ENCODE measurements at regions of chr17 and their contacts with region 1.

Region 1: DNA sequence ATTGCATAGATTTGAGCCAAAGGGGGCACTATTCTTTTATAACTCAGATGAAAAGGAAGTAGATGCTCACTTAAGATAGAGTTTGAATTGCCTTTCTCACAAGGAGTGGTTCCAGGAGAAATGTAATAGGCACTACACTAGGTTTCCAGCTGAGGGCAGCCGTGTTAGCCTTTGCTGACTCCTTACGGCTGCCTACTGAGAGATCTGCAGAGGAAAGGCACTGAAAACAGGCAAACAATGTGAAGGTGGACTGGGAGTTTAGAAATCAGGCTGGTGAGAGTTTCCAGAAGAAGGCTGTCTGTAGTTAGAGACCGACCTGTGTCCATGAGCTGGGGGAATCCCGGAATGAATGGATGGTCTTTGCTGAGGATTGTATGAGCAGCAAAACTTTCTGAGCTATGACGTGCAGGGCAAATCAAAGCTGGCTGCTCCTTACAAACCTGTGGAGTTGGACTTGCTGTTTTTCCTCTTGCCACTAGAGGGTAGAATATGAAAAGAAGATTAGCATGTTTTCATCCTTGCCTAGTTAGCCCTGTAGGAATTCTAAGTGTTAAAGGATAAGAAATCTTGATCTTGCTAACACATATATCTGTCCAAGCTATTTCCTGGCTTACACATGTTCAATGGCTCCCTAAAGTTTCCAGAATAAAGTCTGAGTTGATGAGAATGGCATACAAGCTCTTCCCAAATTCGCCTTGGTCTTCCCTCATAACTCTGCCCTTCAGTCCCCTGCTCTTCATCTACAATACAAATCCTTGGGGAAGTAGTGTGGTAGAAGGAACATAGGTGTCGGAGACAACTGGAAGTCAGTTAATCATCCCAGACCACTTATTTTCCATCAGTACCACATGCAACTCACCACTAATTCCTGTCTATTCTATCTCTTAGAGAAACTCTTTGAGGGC is 20.1 kb upstream of the TAOK1 start:
- DNase-seq: peak; percentile 89 to 93
- ATAC-seq: peak; percentile 97 to 99
- H3K4me3 ChIP-seq: no peak overlapping the region; the same call in 2 of the 3 replicates
- H3K27ac ChIP-seq: peak overlapping the region; percentile 20 to 63; a peak in 4 of 6 replicates
- H3K4me1 ChIP-seq: peaks cover 14% of the 10 kb centered on the region
- CTCF ChIP-seq: peak; percentile 94
- EP300 ChIP-seq: no peak
- POLR2A ChIP-seq: no peak
- RAD21 ChIP-seq: peak; percentile 82 to 89

Region 2: GRCh38 chr17:29347831-29348629 is 22.1 kb before region 1 on chr17:
- CTCF ChIA-PET with region 1: interaction called, 158 read pairs
- POLR2A ChIA-PET with region 1: no interaction called
- DNase-seq: no peak
- ATAC-seq: no peak
- H3K4me3 ChIP-seq: no peak overlapping the region
- H3K27ac ChIP-seq: no peak overlapping the region
- H3K4me1 ChIP-seq: no peaks in the 10 kb centered on the region
- CTCF ChIP-seq: no peak
- EP300 ChIP-seq: no peak
- POLR2A ChIP-seq: no peak
- RAD21 ChIP-seq: no peak

Region 3: DNA sequence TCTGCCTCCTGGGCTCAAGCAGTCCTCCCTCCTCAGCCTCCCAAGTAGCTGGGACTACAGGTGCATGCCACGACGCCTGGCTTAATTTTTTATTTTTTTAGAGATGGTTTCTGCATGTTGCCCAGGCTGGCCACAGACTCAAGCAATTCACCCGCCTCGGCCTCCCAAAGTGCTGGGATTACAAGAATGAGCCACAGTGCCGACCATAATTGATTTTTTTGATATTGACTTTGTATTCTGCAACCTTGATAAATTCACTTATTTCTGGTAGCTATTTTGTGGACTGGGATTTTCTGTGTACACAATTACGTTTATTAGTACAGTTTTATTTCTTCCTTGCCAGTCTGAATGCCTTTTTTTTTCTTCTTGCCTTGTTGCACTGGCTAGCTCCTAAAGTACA is 50.0 kb after region 1 on chr17:
- CTCF ChIA-PET with region 1: interaction called, 14 read pairs
- POLR2A ChIA-PET with region 1: no interaction called
- DNase-seq: no peak
- ATAC-seq: no peak
- H3K4me3 ChIP-seq: no peak overlapping the region
- H3K27ac ChIP-seq: no peak overlapping the region
- H3K4me1 ChIP-seq: peaks cover 11% of the 10 kb centered on the region; the same call in 2 of the 3 replicates
- CTCF ChIP-seq: no peak
- EP300 ChIP-seq: no peak
- POLR2A ChIP-seq: no peak
- RAD21 ChIP-seq: no peak

Region 4: DNA sequence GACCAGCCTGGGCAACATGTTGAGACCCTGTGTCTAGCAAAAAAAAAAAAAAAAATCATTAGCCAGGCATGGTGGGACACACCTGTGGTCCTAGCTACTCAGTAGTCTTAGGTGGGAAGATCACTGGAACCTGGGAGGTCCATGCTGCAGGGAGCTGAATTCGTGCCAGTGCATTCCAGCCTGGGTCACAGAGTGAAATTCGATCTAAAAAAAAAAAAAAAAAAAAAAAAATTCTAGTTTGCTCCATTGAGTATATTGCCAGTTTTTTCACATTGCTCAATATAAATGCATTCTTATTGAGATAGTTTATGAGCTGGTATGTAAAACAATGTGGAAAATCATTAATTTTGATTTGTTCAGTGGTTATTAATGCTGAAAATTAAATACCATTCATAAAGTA is 144.7 kb after region 1 on chr17:
- CTCF ChIA-PET with region 1: interaction called, 12 read pairs
- POLR2A ChIA-PET with region 1: no interaction called
- DNase-seq: no peak
- ATAC-seq: no peak
- H3K4me3 ChIP-seq: no peak overlapping the region
- H3K27ac ChIP-seq: no peak overlapping the region
- H3K4me1 ChIP-seq: no peaks in the 10 kb centered on the region
- CTCF ChIP-seq: no peak
- EP300 ChIP-seq: no peak
- POLR2A ChIP-seq: no peak
- RAD21 ChIP-seq: no peak

Region 5: GRCh38 chr17:29561554-29562517 is 191.8 kb after region 1 on chr17:
- CTCF ChIA-PET with region 1: interaction called, 100 read pairs
- POLR2A ChIA-PET with region 1: interaction called, 4 read pairs
- DNase-seq: no peak
- ATAC-seq: no peak
- H3K4me3 ChIP-seq: no peak overlapping the region
- H3K27ac ChIP-seq: no peak overlapping the region
- H3K4me1 ChIP-seq: peaks cover 25% of the 10 kb centered on the region
- CTCF ChIP-seq: no peak
- EP300 ChIP-seq: no peak
- POLR2A ChIP-seq: no peak
- RAD21 ChIP-seq: no peak

Region 6: GRCh38 chr17:29617125-29617480 is 247.0 kb after region 1 on chr17:
- CTCF ChIA-PET with region 1: interaction called, 12 read pairs
- POLR2A ChIA-PET with region 1: no interaction called
- DNase-seq: peak; percentile 84 to 88
- ATAC-seq: peak; percentile 19 to 67; a peak in 3 of 6 replicates
- H3K4me3 ChIP-seq: peak overlapping the region; percentile 23; the same call in 1 of the 3 replicates
- H3K27ac ChIP-seq: peak overlapping the region in 1 of 2 experiments; percentile 82; a peak in 4 of 6 replicates
- H3K4me1 ChIP-seq: peaks cover 56% of the 10 kb centered on the region
- CTCF ChIP-seq: peak; percentile 58
- EP300 ChIP-seq: no peak
- POLR2A ChIP-seq: peak; percentile 21; the same call in 1 of the 2 replicates
- RAD21 ChIP-seq: peak in 1 of 2 experiments; percentile 23; a peak in 1 of 5 replicates

Measured in A549 (cell line).